ENCODE measurements at regions of chr15 and their contacts with region 1.

Region 1: DNA sequence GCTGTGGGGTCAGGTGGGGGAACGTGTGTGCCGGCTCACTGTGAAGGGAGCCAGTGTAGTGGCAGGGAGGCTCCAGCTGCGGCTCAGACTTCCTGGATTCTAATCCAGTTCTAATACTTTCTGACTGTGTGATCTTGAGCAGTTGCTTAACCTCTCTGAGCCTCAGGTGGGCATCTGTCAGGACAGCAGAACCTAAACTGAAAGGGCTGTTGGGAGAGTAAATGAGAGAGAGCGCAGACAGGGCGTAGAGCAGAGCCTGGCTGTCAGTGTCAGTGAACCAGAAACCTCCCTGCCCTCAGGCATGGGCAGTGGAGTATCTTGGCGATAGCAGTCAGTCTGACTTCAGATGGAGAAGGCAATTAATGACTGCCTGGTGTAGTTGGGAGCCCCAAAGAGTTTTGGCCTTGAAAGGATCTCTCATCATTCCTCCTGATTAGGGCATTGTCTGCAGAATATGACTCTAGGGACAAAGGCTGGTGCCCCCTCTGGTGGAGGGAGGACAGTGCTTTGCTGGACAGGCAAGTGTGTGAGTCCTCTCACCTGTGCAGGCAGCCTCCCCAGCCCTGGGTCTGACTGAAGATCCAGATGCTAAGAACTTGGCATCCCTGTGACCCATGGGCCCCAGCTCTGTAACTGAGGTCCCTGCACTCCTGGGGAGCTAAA is 9.6 kb downstream of the KBTBD13 start:
- DNase-seq: no peak
- H3K4me3 ChIP-seq: no peak overlapping the region
- H3K27ac ChIP-seq: no peak overlapping the region
- H3K27me3 ChIP-seq: peaks cover 18% of the 10 kb centered on the region
- CTCF ChIP-seq: peak; percentile 55

Region 2: GRCh38 chr15:65054333-65055200 is 31.6 kb before region 1 on chr15:
- CTCF ChIA-PET with region 1: interaction called, 83 read pairs
- POLR2A ChIA-PET with region 1: interaction called, 6 read pairs
- DNase-seq: no peak
- H3K4me3 ChIP-seq: no peak overlapping the region
- H3K27ac ChIP-seq: no peak overlapping the region
- H3K27me3 ChIP-seq: peaks cover under 1% of the 10 kb centered on the region
- CTCF ChIP-seq: peak; percentile 99

Region 3: DNA sequence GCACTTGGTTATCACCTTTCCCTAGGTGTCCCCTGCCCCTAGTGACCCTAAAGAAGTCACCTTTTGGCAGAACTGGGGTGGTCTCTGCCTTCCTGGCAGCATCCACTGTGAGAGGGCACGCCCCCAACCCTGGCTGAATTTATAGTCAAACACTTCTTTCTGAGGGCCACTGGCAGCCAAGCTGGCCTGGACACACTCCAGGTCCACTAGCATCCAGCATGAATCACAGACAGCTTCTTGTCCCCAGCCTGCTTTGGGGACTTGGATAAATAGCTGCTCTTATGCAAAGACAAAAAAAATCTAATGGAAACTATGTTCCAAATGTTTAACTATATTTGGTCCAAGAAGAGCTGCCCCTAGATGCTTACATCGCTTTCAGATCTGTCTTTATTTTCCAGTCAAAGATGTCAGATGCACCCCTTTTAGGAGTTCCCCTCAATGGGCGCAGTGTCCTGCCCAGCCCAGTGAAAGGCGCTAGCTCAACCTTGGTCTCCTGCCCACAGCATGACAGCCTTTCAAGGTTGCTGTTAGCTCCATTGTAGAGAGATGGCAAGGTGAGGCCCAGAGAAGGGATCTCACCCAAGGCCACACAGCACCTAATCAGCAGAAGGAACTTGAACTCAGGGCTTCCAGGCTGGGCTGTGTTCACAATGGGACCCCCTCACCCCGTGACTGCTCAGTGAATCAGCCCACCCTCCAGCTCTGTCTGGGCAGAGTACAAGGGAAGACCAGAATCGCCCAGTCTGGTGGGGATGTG is 25.3 kb before region 1 on chr15:
- CTCF ChIA-PET with region 1: interaction called, 83 read pairs
- POLR2A ChIA-PET with region 1: interaction called, 4 read pairs
- DNase-seq: no peak
- H3K4me3 ChIP-seq: no peak overlapping the region
- H3K27ac ChIP-seq: no peak overlapping the region
- H3K27me3 ChIP-seq: peaks cover 13% of the 10 kb centered on the region
- CTCF ChIP-seq: no peak

Region 4: DNA sequence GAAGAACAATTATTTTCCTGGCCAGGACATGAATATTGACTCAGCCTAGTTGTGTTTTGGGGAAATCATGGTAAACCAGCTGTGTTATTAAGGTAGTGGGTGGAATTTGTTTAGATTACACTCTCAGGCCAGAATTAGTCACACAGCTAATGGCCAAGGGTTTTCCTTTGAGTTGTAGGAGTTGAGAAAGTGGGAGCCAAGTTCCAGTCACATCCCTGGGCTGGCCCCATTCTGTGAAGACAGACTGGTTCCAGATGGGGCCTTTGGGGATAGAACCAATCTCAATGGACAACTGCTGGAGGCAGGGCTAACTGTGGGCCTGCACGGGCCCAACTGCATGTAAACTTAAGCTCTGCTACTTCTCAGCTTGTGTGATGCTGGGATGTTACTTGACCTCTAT is 17.0 kb before region 1 on chr15:
- CTCF ChIA-PET with region 1: interaction called, 27 read pairs
- POLR2A ChIA-PET with region 1: interaction called, 32 read pairs
- DNase-seq: peak; percentile 99
- H3K4me3 ChIP-seq: no peak overlapping the region
- H3K27ac ChIP-seq: peak overlapping the region; percentile 91
- H3K27me3 ChIP-seq: peaks cover 9% of the 10 kb centered on the region
- CTCF ChIP-seq: no peak

Region 5: DNA sequence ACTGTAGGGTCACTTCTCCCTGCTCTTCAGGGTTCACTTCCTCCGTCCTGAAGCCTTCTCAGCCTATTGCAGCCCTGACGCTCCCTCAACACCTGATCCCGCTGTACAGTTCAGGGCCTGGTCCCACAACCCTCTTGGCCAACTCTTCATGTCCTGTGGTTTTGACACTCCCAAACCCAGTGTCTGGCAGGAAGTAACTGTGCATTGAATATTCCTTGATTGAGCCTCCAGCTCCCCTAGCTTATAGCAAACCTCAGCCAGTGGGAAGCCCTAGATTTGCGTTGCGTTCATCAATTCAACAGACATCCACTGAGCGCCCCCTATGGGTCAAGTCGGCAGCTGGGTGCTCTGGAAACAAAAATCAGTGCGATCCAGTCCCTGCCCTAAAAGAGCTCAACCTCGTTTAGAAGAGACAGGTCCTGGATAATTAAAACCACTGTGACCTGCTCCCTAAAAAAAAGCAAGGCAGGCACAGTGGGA is 15.3 kb after region 1 on chr15:
- CTCF ChIA-PET with region 1: interaction called, 39 read pairs
- POLR2A ChIA-PET with region 1: interaction called, 3 read pairs
- DNase-seq: peak; percentile 36
- H3K4me3 ChIP-seq: no peak overlapping the region
- H3K27ac ChIP-seq: no peak overlapping the region
- H3K27me3 ChIP-seq: no peaks in the 10 kb centered on the region
- CTCF ChIP-seq: peak; percentile 93

Region 6: DNA sequence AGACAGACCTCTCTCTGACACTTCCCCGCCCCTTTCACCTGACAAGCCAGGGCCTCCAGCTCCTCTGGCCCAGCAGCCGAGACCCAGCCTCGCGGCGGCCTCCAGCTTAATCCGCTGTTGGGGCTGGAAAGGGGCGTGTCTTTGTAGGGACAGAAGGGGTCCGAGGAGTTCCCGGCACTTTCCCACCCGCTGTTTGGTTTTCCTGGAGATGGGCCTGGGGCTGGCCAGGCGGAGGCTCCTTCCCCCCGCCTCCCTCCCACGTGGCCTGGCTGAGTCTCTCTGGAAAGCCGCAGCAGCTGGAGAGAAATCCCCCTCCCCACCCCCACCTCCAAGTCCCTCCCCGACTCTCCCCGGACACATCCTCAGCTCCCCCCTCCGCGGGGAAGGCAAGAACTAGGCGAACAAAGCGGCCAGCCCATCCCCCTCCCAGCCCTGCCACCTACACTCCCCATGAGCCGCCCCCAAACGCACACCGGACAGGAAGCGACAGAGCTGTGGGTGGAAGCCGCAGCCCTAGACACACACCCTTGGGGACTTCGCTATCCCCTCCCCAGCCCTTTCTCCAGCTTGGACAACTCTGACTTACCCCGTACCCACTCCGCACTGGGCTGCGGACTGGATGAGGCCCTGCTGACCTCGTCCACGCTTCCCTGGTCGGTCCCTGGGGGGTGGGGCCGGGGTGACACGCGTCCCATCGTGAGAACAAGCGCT is 335.4 kb after region 1 on chr15:
- CTCF ChIA-PET with region 1: no interaction called
- POLR2A ChIA-PET with region 1: no interaction called
- DNase-seq: peak; percentile 46
- H3K4me3 ChIP-seq: peak overlapping the region; percentile 68
- H3K27ac ChIP-seq: peak overlapping the region; percentile 65
- H3K27me3 ChIP-seq: peaks cover 18% of the 10 kb centered on the region
- CTCF ChIP-seq: no peak

Measured in AG04450 (cell line).